ENCODE measurements at regions of chr5 and their contacts with region 1.

Region 1: GRCh38 chr5:51382763-51383490 is at the start of gene ISL1:
- DNase-seq: no peak
- H3K4me3 ChIP-seq: no peak within 1 kb of the TSS
- H3K27ac ChIP-seq: no peak within 1 kb of the TSS
- H3K4me1 ChIP-seq: no peaks in the 10 kb centered on the region; the same call in 1 of the 2 replicates
- H3K27me3 ChIP-seq: no peaks in the 10 kb centered on the region
- CTCF ChIP-seq: no peak
- total RNA-seq, gene ISL1: not detected in 2 replicates

Region 2: DNA sequence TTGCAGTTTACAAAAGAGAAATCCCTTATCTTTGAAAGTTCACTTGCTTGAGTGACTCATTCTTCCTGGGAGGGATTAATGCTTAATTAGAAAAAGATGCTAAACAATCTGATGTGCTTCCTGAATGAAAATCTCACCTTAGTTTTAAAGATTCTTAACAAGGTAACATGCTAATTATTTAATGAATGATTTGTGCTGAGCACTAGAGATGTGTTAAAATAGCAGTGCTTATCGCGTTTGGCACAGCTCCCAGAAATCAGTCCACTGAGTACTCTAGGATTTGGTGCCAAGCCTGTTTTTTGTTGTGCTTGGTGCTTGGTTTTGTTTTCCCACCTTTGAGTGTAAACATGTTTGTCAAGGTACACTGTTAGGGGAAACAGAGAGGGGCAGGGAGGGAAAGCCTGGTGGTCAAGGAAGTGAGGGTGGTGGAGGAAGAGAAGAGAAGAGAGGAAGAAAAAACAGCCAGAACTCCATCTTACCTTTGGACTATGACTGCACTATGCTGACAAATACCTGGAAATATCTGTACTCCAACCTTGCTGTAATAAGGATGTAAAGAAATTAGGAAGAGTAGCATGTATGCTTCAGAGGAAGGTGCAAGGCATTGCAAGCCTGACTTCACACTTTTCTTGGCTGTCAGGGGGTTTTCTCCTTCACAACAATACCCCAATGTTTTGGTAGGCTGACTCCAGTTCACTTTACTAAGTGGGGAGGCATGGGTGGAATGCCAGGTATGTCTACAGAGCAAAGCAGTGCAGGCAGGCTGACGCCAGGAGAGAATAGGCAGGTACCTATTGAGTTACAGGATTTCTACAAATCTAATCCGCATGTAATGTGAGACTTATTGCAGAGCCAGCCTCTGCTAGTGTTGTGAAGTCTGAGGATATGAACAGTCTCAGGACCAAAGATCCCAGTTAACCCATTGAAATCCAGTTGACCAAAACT is 156.9 kb before region 1 on chr5:
- CTCF ChIA-PET with region 1: no interaction called
- POLR2A ChIA-PET with region 1: no interaction called
- intact Hi-C with region 1: loop called (anchors 2 kb)
- DNase-seq: peak; percentile 67 to 77
- H3K4me3 ChIP-seq: no peak overlapping the region
- H3K27ac ChIP-seq: 0 out of 2 replicates have a peak overlapping the region, but pooled peaks have one; percentile 3
- H3K4me1 ChIP-seq: no peaks in the 10 kb centered on the region
- H3K27me3 ChIP-seq: no peaks in the 10 kb centered on the region
- CTCF ChIP-seq: no peak

Region 3: GRCh38 chr5:51684794-51685355 is 301.9 kb after region 1 on chr5:
- CTCF ChIA-PET with region 1: no interaction called
- POLR2A ChIA-PET with region 1: no interaction called
- intact Hi-C with region 1: loop called (anchors 5 kb)
- DNase-seq: no peak
- H3K4me3 ChIP-seq: no peak overlapping the region
- H3K27ac ChIP-seq: no peak overlapping the region
- H3K4me1 ChIP-seq: no peaks in the 10 kb centered on the region
- H3K27me3 ChIP-seq: no peaks in the 10 kb centered on the region
- CTCF ChIP-seq: peak; percentile 52

Region 4: DNA sequence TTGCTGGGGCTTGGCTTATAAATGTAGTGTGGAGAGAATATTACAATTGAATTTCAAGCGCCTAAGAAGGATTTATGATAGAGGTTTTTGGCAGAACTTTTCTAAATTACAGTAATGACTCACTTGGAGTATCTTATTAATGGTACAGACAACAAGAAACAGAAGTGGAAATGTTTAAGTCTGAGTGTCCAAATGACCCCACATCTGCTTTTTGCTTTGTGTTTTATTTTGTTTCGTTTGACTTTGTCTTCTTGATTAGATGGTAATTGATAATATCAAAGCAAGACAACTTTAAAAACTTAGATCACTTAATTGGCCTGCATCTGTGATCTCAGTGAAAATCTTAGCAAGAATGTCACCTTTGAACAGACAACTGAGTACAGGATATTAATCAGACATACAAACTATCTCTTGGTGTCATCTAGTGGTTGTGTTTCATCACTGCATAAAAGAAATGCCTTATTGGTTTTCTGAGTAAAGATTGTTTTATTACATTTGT is 577.7 kb after region 1 on chr5:
- CTCF ChIA-PET with region 1: no interaction called
- POLR2A ChIA-PET with region 1: no interaction called
- intact Hi-C with region 1: loop called (anchors 2 kb)
- DNase-seq: no peak
- H3K4me3 ChIP-seq: no peak overlapping the region
- H3K27ac ChIP-seq: no peak overlapping the region
- H3K4me1 ChIP-seq: no peaks in the 10 kb centered on the region
- H3K27me3 ChIP-seq: no peaks in the 10 kb centered on the region
- CTCF ChIP-seq: peak; percentile 72

Region 5: GRCh38 chr5:52007230-52007858 is 624.4 kb after region 1 on chr5:
- CTCF ChIA-PET with region 1: no interaction called
- POLR2A ChIA-PET with region 1: no interaction called
- intact Hi-C with region 1: loop called (anchors 5 kb)
- DNase-seq: peak in 1 of 2 experiments; percentile 20
- H3K4me3 ChIP-seq: no peak overlapping the region
- H3K27ac ChIP-seq: no peak overlapping the region
- H3K4me1 ChIP-seq: no peaks in the 10 kb centered on the region
- H3K27me3 ChIP-seq: no peaks in the 10 kb centered on the region
- CTCF ChIP-seq: peak; percentile 76

Measured in PC-9 (cell line).